H1 (cell line): ENCODE measurements at regions of chr10 and their contacts with region 1.

Region 1: GRCh38 chr10:102426803-102427287 is 5.5 kb downstream of the CUEDC2 start:
- DNase-seq: no peak
- H3K4me3 ChIP-seq: no peak overlapping the region
- H3K27ac ChIP-seq: no peak overlapping the region
- H3K4me1 ChIP-seq: peaks cover 0 to 18% (median 9%) of the 10 kb centered on the region in 4 experiments; a peak in 6 of 7 replicates
- H3K27me3 ChIP-seq: no peaks in the 10 kb centered on the region
- CTCF ChIP-seq: no peak
- EP300 ChIP-seq: no peak
- POLR2A ChIP-seq: no peak
- RAD21 ChIP-seq: no peak

Region 2: GRCh38 chr10:102120991-102121753 is 305.7 kb before region 1 on chr10:
- CTCF ChIA-PET with region 1: no interaction called
- POLR2A ChIA-PET with region 1: no interaction called
- DNase-seq: peak; percentile 89 to 91
- H3K4me3 ChIP-seq: peak overlapping the region; percentile 80 to 93 (median 84)
- H3K27ac ChIP-seq: peak overlapping the region; percentile 85
- H3K4me1 ChIP-seq: peaks cover 22 to 42% (median 28%) of the 10 kb centered on the region in 4 experiments
- H3K27me3 ChIP-seq: no peaks in the 10 kb centered on the region
- CTCF ChIP-seq: no peak
- EP300 ChIP-seq: no peak
- POLR2A ChIP-seq: peak; percentile 8 to 44; a peak in 2 of 3 replicates
- RAD21 ChIP-seq: no peak

Region 3: DNA sequence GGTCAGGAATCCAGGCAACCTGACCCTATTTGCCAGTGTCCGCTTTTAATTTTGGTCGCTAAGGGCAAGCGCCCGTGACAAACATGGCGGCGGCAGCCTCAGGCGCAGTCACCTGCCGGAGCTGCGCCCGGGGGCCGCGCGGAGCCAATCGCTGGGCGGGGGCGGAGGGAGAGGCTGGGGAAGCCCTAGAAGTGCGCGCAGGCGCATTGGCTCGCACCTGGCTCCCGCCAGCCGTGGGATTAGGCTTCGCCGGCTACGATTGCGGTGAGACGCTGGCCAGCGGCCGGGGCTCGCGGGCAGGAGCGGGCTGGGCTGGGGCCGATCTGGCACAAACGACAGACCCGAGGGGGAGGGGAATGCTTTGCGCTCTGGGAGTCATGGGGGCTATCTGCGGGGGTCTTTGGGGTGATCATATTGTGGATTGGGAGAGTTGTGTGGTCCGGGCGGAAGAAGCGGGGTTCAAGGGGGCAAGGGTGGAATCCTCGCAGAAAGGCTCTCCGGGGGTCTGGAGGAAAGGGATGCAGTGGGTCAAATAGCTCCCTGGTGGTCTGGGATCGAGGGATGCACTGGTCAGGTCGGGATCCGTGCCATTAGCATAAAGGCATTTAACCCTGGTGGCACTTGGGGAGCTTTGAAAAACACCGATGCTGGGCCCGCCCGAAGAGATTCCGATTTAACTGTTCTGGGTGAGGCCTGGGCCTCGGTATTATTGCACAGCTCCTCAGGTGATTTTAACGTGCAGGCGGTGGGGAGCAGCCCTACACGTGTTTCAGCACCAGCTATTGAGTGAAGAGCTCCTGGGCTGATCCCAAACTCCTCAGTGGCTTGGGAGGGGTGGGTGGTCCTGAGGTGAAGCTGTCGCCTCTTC is 34.6 kb after region 1 on chr10:
- CTCF ChIA-PET with region 1: interaction called, 40 read pairs
- POLR2A ChIA-PET with region 1: interaction called, 41 read pairs
- DNase-seq: peak; percentile 75 to 98
- H3K4me3 ChIP-seq: peak overlapping the region; percentile 50 to 75 (median 67)
- H3K27ac ChIP-seq: peak overlapping the region; percentile 51; the same call in 1 of the 2 replicates
- H3K4me1 ChIP-seq: peaks cover 8 to 24% (median 14%) of the 10 kb centered on the region in 4 experiments
- H3K27me3 ChIP-seq: peaks cover 0 to 5% (median 0%) of the 10 kb centered on the region in 4 experiments; a peak in 1 of 7 replicates
- CTCF ChIP-seq: no peak
- EP300 ChIP-seq: peak in 1 of 2 experiments; percentile 16; a peak in 1 of 3 replicates
- POLR2A ChIP-seq: peak in 1 of 2 experiments; percentile 71; a peak in 2 of 3 replicates
- RAD21 ChIP-seq: no peak

Region 4: DNA sequence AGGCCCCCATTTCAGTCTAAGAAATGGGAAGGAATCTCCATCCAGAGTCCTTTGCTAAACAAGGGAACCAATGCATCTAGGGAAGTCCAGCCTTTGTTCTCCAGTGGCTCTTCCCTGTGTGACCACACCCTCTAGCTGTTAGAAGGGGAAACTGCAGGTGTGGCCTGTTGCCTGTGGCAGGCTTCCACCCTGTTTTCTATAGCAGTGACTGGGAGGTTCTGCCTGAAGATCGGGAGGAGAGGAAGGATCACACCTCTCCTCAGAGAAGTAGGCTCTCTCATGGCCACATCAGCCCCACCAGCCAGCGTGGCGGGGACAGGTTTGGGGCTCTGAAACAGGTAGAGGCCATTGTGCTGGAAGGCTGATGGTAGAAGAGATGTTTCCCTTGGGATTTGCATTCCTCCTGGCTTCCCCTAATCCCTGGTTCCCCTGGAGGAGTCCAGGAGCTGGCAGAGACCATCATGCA is 169.7 kb after region 1 on chr10:
- CTCF ChIA-PET with region 1: no interaction called
- POLR2A ChIA-PET with region 1: no interaction called
- DNase-seq: peak in 1 of 2 experiments; percentile 65
- H3K4me3 ChIP-seq: no peak overlapping the region
- H3K27ac ChIP-seq: no peak overlapping the region
- H3K4me1 ChIP-seq: peaks cover 0 to 2% (median 0%) of the 10 kb centered on the region in 4 experiments; a peak in 3 of 7 replicates
- H3K27me3 ChIP-seq: no peaks in the 10 kb centered on the region; a peak in 1 of 7 replicates
- CTCF ChIP-seq: peak; percentile 81 to 97 (median 87)
- EP300 ChIP-seq: no peak
- POLR2A ChIP-seq: no peak
- RAD21 ChIP-seq: peak; percentile 77 to 85